ENCODE measurements at regions of chr1 and their contacts with region 1.

Region 1: GRCh38 chr1:145942405-145942804 is 15.1 kb upstream of the RBM8A start:
- DNase-seq: no peak
- H3K4me3 ChIP-seq: no peak overlapping the region
- H3K27ac ChIP-seq: no peak overlapping the region
- H3K4me1 ChIP-seq: peaks cover 6% of the 10 kb centered on the region
- CTCF ChIP-seq: no peak

Region 2: DNA sequence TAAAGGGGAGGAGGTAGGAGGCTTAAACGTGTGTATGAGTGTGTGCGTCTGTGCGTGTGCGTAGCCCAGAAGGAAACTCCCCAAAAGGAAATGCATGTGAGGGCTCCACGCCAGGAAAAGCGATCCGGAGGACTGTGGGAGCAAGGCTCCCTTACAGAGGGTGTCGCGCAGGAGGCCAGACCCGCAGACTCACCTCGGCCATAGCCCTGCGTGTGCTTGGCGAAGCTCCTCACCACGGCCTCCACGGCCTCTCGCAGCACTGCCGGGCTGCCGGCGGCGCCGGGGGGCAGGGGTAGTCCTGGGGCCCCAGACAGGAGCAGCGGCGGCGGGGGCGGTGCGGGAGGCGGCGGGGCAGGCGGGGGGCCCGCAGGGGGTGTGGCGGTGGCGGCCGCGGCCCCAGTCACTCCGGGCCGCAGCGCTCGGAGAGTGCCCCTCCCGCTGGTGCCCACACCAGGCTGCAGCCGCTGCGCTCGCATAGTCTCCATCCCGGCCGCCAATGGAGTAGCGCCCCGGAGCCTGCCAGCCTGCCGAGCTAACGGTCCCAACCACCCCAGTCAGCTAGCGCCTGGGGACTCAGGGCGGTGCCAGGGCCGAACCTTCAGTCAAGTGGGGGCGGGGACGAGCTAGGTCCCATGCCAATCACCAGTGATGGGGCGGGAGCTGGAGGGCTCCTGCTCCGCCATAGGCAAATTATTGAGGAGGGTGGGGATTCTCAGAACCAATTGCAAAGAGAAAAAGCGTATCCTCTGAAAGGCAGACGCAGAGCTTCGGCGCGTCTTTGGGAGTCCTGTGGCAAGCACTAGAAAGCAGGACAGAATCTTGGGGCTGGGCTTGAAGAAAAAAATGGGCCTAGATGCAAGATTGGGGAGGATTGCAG is 15.3 kb after region 1 on chr1 and contains the start of gene LIX1L:
- CTCF ChIA-PET with region 1: interaction called, 4 read pairs
- POLR2A ChIA-PET with region 1: interaction called, 16 read pairs
- intact Hi-C with region 1: no loop called
- DNase-seq: peak; percentile 98
- H3K4me3 ChIP-seq: peak within 1 kb of the TSS; percentile 86
- H3K27ac ChIP-seq: peak within 1 kb of the TSS; percentile 53
- H3K4me1 ChIP-seq: peaks cover 63% of the 10 kb centered on the region
- CTCF ChIP-seq: no peak
- total RNA-seq, gene LIX1L: 10.2 and 11.6 TPM in 2 replicates

Region 3: GRCh38 chr1:146019231-146020057 is 77.0 kb after region 1 on chr1:
- CTCF ChIA-PET with region 1: no interaction called
- POLR2A ChIA-PET with region 1: no interaction called
- intact Hi-C with region 1: no loop called
- DNase-seq: no peak
- H3K4me3 ChIP-seq: no peak overlapping the region
- H3K27ac ChIP-seq: no peak overlapping the region
- H3K4me1 ChIP-seq: no peaks in the 10 kb centered on the region
- CTCF ChIP-seq: no peak

Measured in OCI-LY7 (cell line).